ENCODE measurements at regions of chr18 and their contacts with region 1.

Region 1: DNA sequence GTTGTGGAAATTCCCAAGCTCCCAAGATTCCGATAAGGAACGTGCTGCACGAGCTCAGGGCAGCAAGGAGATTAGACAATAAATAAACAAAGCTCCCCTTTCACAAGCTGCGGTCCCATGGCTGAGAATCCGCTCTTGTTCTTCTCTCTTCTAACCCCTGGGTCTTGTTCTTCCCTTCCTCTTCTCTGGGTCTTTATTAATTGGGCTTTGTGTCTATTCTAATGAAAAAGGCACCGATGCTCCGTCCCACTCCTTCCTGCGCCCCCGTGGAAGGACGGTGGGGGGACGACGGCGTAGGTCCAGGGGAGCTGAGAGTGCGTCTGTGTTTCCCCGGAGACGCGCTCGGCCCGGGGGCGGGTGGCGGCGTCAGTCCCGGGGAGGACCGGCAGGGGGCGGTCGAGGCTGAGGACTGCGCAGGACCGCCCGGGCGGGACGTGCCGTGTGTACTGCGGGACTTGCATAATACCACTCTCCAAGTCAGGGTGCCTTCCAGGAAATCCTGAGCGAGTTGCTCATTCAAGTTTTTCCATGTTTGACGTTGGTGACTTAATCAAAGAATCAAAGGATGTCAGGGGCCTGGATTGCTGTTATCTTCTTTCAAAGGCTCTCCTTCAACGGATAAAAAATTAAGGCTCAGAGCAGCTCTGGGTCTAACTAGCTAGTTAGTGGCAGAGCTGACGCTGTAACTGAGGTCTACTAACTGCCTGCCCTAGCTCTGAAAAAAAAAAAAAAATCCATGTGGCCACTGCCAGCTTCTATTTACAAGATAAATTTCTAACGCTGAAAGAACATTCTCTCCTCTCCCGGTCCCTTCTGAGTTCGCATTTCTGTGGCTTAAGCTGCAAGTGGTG is 321.4 kb downstream of the TGIF1 start:
- DNase-seq: peak; percentile 96
- ATAC-seq: peak; percentile 99
- H3K4me3 ChIP-seq: peak overlapping the region; percentile 60
- H3K27ac ChIP-seq: peak overlapping the region; percentile 91
- H3K4me1 ChIP-seq: peaks cover 5% of the 10 kb centered on the region
- H3K27me3 ChIP-seq: no peaks in the 10 kb centered on the region
- CTCF ChIP-seq: peak; percentile 97
- POLR2A ChIP-seq: peak; percentile 31; the same call in 1 of the 2 replicates
- RAD21 ChIP-seq: peak; percentile 92

Region 2: DNA sequence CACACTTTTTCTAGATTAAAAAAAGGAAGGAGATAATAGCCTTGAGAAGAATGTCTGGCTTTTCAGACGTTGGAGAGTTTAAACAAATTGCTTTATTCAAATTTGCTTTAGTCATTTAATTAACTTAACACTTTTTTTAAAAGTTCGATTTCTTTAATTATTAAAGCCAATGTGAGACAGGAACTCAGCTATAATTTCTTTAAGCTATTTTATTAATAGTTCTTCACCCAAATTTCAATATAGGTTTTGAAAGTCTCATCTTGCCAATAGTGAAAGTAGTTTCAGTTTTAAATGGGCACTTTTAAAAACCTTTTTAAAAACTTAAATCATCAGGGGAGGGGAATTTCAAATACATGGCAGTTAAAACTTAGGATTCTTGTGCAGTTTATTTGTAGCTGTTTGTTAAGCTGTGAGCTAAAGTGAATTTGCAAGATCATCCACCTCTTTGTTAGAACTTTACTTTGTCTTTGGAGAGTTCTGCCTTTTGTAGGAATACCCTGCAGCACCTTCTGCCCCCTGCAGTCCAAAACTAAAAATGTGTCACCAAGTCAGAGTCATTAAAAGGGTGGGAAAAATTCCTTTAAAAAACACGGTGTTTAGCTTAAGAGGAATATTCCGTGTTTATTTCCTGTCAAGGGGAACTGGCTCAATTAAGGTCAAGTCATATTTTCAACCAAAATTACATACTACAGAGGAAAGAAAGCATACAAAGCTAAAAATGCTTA is 316.8 kb before region 1 on chr18:
- CTCF ChIA-PET with region 1: no interaction called
- POLR2A ChIA-PET with region 1: no interaction called
- dilution Hi-C with region 1: no loop called
- in situ Hi-C with region 1: no loop called
- intact Hi-C with region 1: loop called (anchors 1 kb)
- DNase-seq: peak; percentile 72
- ATAC-seq: no peak
- H3K4me3 ChIP-seq: peak overlapping the region; percentile 85
- H3K27ac ChIP-seq: peak overlapping the region; percentile 30; the same call in 1 of the 2 replicates
- H3K4me1 ChIP-seq: peaks cover 16% of the 10 kb centered on the region
- H3K27me3 ChIP-seq: no peaks in the 10 kb centered on the region
- CTCF ChIP-seq: peak; percentile 60
- POLR2A ChIP-seq: no peak
- RAD21 ChIP-seq: peak; percentile 40; the same call in 1 of the 2 replicates

Region 3: GRCh38 chr18:3665780-3666525 is 105.4 kb before region 1 on chr18:
- CTCF ChIA-PET with region 1: no interaction called
- POLR2A ChIA-PET with region 1: no interaction called
- dilution Hi-C with region 1: no loop called
- in situ Hi-C with region 1: no loop called
- intact Hi-C with region 1: no loop called
- DNase-seq: peak; percentile 91
- ATAC-seq: peak; percentile 96
- H3K4me3 ChIP-seq: no peak overlapping the region
- H3K27ac ChIP-seq: peak overlapping the region; percentile 72
- H3K4me1 ChIP-seq: peaks cover 7% of the 10 kb centered on the region
- H3K27me3 ChIP-seq: no peaks in the 10 kb centered on the region
- CTCF ChIP-seq: peak; percentile 94
- POLR2A ChIP-seq: no peak
- RAD21 ChIP-seq: peak; percentile 99

Region 4: GRCh38 chr18:3816610-3817363 is 45.4 kb after region 1 on chr18:
- CTCF ChIA-PET with region 1: interaction called, 3 read pairs
- POLR2A ChIA-PET with region 1: no interaction called
- dilution Hi-C with region 1: no loop called
- in situ Hi-C with region 1: no loop called
- intact Hi-C with region 1: loop called (anchors 2 kb)
- DNase-seq: peak; percentile 99
- ATAC-seq: peak; percentile 87
- H3K4me3 ChIP-seq: no peak overlapping the region
- H3K27ac ChIP-seq: peak overlapping the region; percentile 92
- H3K4me1 ChIP-seq: peaks cover 15% of the 10 kb centered on the region
- H3K27me3 ChIP-seq: no peaks in the 10 kb centered on the region
- CTCF ChIP-seq: no peak
- POLR2A ChIP-seq: no peak
- RAD21 ChIP-seq: no peak

Region 5: GRCh38 chr18:3983351-3983969 is 212.1 kb after region 1 on chr18:
- CTCF ChIA-PET with region 1: interaction called, 29 read pairs
- POLR2A ChIA-PET with region 1: no interaction called
- dilution Hi-C with region 1: no loop called
- in situ Hi-C with region 1: loop called (anchors 5 kb)
- intact Hi-C with region 1: no loop called
- DNase-seq: peak; percentile 91
- ATAC-seq: peak; percentile 45
- H3K4me3 ChIP-seq: no peak overlapping the region
- H3K27ac ChIP-seq: no peak overlapping the region
- H3K4me1 ChIP-seq: peaks cover 13% of the 10 kb centered on the region
- H3K27me3 ChIP-seq: no peaks in the 10 kb centered on the region
- CTCF ChIP-seq: no peak
- POLR2A ChIP-seq: no peak
- RAD21 ChIP-seq: no peak

Region 6: GRCh38 chr18:4068552-4069158 is 297.3 kb after region 1 on chr18:
- CTCF ChIA-PET with region 1: no interaction called
- POLR2A ChIA-PET with region 1: no interaction called
- dilution Hi-C with region 1: no loop called
- in situ Hi-C with region 1: no loop called
- intact Hi-C with region 1: loop called (anchors 1 kb)
- DNase-seq: peak; percentile 56
- ATAC-seq: peak; percentile 91
- H3K4me3 ChIP-seq: no peak overlapping the region
- H3K27ac ChIP-seq: no peak overlapping the region
- H3K4me1 ChIP-seq: no peaks in the 10 kb centered on the region
- H3K27me3 ChIP-seq: no peaks in the 10 kb centered on the region
- CTCF ChIP-seq: peak; percentile 61
- POLR2A ChIP-seq: no peak
- RAD21 ChIP-seq: peak; percentile 55

Measured in IMR-90 (cell line).